Activated B cell treated with CpG ODN at 0.5 μM for 24 hours (primary cell): ENCODE measurements at regions of chr7 and their contacts with region 1.

Region 1: DNA sequence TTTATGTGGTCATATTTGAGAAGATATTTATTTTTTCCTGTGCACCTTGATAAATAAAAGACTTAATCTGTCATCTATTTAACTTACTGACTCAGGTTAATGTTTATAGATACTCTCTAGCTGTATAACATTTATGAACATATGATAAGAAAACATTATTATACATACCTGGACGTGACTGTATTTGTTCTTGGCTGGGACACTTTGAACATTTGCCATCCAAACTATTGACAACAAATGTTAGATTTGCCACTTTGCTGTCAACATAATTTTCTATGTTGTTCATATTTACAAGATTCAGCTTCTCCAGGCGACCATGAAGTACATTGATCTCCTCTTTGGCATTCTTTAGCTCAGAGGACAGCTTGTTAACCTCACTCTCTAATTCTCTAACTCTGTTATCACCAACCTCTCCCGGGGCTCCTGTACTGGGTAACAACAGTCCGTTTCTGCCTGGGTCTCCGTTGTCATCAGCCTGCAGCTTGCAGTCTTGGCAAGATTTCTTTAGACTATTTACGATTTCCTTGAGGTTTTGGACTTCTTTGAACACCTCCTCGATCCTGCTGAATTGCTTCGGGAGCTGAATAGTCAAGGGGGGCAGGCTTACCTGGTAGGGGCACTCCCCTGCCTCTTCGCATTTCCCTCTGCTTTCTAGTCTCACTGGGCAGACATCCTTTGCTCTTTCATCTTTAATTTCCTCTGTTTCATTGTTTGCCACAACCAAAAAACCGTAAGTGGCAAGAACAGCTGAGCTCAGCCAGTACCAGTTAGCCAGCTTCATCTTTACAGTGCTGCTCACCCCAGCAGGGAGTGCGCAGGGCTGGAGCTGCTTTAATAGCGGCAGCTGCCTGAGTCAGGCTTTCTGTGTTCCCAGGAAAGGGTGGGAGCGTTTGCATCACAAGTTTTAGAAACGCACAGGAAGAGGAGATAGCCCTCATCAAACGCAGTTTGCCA is at the start of gene FGL2:
- DNase-seq: no peak
- ATAC-seq: peak; percentile 38
- H3K4me3 Mint-ChIP-seq: peak within 1 kb of the TSS; percentile 88
- H3K27ac Mint-ChIP-seq: peak within 1 kb of the TSS; percentile 98
- H3K4me1 Mint-ChIP-seq: peaks cover 60% of the 10 kb centered on the region
- H3K27me3 Mint-ChIP-seq: no peaks in the 10 kb centered on the region
- CTCF ChIP-seq: no peak
- total RNA-seq, gene FGL2: 5.7 and 6.7 TPM in 2 replicates

Region 2: DNA sequence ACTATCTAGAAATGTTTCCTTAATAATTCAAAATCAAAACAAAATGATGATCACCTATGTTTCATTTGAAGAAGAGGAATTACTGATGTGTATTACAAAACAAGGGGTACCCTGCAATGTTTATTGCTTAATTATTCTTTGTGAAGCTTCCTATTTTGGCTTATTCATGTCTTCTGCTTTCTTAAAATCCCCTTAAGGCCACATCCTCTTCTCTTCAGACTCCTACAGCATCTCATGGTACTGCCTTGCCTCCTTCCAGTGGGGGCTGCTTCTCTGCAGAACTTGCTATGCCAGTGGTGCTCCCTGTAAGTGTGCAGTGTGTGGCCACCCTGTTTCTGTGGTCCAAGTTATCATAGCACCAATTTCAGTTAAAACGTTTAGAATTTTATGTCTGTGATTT is 41.8 kb before region 1 on chr7:
- CTCF ChIA-PET with region 1: no interaction called
- POLR2A ChIA-PET with region 1: interaction called, 5 read pairs
- intact Hi-C with region 1: loop called (anchors 5 kb)
- DNase-seq: no peak
- ATAC-seq: peak; percentile 70
- H3K4me3 Mint-ChIP-seq: no peak overlapping the region
- H3K27ac Mint-ChIP-seq: peak overlapping the region; percentile 74
- H3K4me1 Mint-ChIP-seq: peaks cover 7% of the 10 kb centered on the region
- H3K27me3 Mint-ChIP-seq: no peaks in the 10 kb centered on the region
- CTCF ChIP-seq: no peak

Region 3: GRCh38 chr7:77188731-77189437 is 10.4 kb before region 1 on chr7:
- CTCF ChIA-PET with region 1: interaction called, 4 read pairs
- POLR2A ChIA-PET with region 1: interaction called, 53 read pairs
- intact Hi-C with region 1: loop called (anchors 1 kb)
- DNase-seq: no peak
- ATAC-seq: no peak
- H3K4me3 Mint-ChIP-seq: no peak overlapping the region
- H3K27ac Mint-ChIP-seq: no peak overlapping the region
- H3K4me1 Mint-ChIP-seq: peaks cover 31% of the 10 kb centered on the region
- H3K27me3 Mint-ChIP-seq: no peaks in the 10 kb centered on the region
- CTCF ChIP-seq: no peak

Region 4: DNA sequence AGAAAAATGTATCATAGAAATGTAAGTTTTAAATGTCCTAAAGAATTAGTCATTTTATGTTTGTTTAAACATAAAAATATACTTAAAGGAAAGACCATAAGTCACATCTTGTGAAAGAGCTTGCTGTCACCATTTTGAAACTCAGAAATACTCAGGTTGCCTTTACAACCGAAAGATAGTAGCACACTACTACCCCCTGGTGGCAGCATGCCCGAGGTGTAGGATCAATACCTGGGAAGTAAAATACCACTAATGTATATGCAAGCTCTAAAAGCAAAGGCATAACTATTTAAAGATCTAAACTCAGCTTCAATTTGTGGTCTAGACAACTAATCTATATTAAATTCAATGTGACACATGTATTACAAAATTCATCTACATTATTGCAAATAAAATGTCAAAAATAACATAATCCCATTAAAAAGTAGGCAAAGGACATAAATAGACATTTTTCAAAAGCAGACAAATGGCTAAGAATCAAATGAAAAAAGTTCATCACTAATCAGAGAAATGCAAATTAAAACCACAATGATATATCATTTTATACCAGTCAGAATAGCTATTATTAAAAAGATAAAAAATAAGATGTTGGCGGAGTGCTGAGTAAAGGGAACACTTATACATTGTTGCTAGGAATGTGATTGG is 48.0 kb after region 1 on chr7:
- CTCF ChIA-PET with region 1: interaction called, 41 read pairs
- POLR2A ChIA-PET with region 1: interaction called, 9 read pairs
- intact Hi-C with region 1: loop called (anchors 2 kb)
- DNase-seq: peak; percentile 70
- ATAC-seq: peak; percentile 99
- H3K4me3 Mint-ChIP-seq: no peak overlapping the region
- H3K27ac Mint-ChIP-seq: no peak overlapping the region
- H3K4me1 Mint-ChIP-seq: no peaks in the 10 kb centered on the region
- H3K27me3 Mint-ChIP-seq: no peaks in the 10 kb centered on the region
- CTCF ChIP-seq: peak; percentile 91

Region 5: DNA sequence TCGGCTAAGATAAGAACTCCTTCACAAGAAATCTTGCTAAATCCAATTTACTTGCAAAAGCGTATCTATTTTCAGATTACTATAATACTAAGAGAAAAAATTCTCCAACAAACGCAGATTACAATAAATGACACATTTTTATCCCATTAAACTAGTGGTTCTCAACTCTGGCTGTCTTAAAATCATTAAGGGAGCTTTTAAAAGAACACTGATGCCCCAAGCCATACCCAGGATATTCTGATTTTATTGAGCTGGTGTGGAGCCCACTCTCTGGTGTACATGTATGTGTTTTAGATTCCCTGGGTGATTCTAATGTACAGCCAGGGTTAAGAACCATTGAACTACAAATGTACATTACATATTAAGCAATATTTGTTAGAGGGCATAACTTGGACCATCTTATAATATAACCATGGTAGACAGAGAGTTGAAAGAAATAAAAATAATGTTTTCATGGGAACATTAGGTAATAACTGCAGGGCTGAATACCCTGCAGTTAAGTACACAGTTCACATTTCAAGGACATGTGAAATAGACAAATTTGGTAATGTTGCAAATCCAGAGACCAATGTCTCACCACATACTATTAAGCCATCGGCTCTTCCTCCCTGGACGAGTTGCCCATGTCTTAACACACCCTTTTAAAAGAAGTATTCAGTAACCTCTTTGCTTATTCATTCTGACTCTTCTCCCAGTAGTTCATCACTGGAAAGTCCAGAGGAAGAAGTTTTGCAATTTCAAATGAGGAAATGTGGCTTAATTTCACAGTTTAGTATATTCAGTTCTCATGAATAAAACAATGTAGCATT is 210.7 kb after region 1 on chr7:
- CTCF ChIA-PET with region 1: no interaction called
- POLR2A ChIA-PET with region 1: interaction called, 4 read pairs
- intact Hi-C with region 1: loop called (anchors 5 kb)
- DNase-seq: no peak
- ATAC-seq: no peak
- H3K4me3 Mint-ChIP-seq: no peak overlapping the region
- H3K27ac Mint-ChIP-seq: peak overlapping the region; percentile 70
- H3K4me1 Mint-ChIP-seq: peaks cover 73% of the 10 kb centered on the region
- H3K27me3 Mint-ChIP-seq: no peaks in the 10 kb centered on the region
- CTCF ChIP-seq: no peak

Region 6: DNA sequence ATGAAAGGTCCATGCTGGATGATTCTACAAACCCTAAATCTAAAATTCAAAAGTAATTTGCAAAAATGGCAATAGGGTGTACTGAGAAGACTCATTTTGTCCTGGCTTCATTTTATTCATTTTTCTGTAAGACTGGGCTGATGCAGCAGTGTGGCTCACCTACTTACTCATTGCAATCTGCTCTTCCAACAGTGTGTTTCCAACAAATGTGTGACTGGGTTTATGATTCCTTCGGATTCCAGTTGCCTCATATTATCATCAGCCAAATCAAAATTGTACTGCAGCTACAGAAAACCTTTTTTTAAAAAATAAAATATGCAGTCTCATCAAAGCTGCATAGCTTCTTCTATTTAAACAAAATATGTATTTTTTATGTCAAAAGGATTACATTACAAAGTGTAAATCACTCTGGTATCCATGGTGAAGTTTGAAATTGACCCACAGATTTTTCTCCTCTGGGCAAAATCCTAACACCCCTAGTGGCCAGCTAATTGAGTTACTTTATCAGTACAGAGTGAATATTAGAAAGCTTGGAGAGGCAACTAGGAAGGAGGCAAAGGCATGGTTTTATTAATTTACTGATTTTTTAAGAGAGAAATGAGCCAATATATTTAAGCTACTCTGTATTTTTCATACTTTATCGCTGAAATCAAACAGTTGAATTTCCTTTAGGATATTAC is 1863.9 kb after region 1 on chr7:
- CTCF ChIA-PET with region 1: no interaction called
- POLR2A ChIA-PET with region 1: no interaction called
- intact Hi-C with region 1: no loop called
- DNase-seq: no peak
- ATAC-seq: no peak
- H3K4me3 Mint-ChIP-seq: no peak overlapping the region
- H3K27ac Mint-ChIP-seq: no peak overlapping the region
- H3K4me1 Mint-ChIP-seq: no peaks in the 10 kb centered on the region
- H3K27me3 Mint-ChIP-seq: no peaks in the 10 kb centered on the region
- CTCF ChIP-seq: no peak